Left ventricle myocardium inferior (tissue), 1 donor: ENCODE measurements at regions of chr13 and their contacts with region 1.

Region 1: DNA sequence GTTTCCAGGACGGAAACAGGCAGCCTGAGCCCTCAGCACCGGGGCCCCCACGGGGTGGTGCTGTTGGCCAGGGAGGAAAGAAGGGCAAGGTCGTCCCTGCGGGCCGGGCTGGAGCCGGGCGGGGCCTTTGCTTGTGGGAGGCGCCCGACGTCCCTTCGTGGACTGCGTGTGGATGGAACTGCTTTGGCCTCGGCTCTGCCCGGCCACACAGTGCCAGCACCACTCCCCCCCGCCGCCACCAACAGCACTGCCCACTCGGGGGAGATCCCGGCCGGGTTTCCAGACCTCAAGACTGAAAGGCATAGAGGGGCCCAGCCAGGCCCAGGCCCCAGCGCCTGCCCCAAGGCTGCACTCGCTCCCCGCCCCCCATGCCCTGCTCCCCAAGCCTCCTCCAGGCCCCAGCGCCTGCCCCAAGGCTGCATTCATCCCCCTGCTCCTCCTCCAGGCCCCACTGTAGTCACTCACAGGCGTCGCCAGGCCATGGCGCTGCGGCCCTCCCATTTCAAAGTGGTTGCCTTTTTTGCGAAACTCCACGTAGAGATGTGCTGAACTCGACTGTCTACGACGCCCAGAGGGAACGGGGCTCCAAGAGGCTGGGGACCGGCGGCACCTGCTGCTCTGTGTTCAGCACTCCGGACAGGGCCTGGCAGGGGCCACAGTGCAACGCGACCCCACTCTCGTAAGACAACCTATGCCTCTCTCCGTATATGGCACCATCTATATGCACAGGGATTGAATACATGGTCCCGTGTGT is 22.5 kb downstream of the C13orf46 start:
- DNase-seq: peak; percentile 88
- H3K4me3 ChIP-seq: peak overlapping the region; percentile 49
- H3K27ac ChIP-seq: no peak overlapping the region
- H3K4me1 ChIP-seq: peaks cover 11% of the 10 kb centered on the region
- H3K27me3 ChIP-seq: no peaks in the 10 kb centered on the region
- CTCF ChIP-seq: peak; percentile 94

Region 2: GRCh38 chr13:114226699-114227323 is 275.4 kb after region 1 on chr13:
- intact Hi-C with region 1: loop called (anchors 2 kb)
- DNase-seq: peak; percentile 82
- H3K4me3 ChIP-seq: no peak overlapping the region
- H3K27ac ChIP-seq: no peak overlapping the region
- H3K4me1 ChIP-seq: peaks cover 15% of the 10 kb centered on the region
- H3K27me3 ChIP-seq: peaks cover 38% of the 10 kb centered on the region
- CTCF ChIP-seq: peak; percentile 96